ENCODE measurements at regions of chr3 and their contacts with region 1.

Region 1: GRCh38 chr3:112333002-112333380 is at the start of gene CD200:
- DNase-seq: peak; percentile 66
- ATAC-seq: peak; percentile 70
- H3K4me3 Mint-ChIP-seq: peak within 1 kb of the TSS; percentile 90
- H3K27ac Mint-ChIP-seq: peak within 1 kb of the TSS; percentile 93
- H3K4me1 Mint-ChIP-seq: peaks cover 38% of the 10 kb centered on the region
- H3K27me3 Mint-ChIP-seq: no peaks in the 10 kb centered on the region
- CTCF ChIP-seq: no peak
- total RNA-seq, gene CD200: 15.7 to 16.7 TPM

Region 2: GRCh38 chr3:112027826-112028225 is 305.2 kb before region 1 on chr3:
- CTCF ChIA-PET with region 1: no interaction called
- POLR2A ChIA-PET with region 1: no interaction called
- intact Hi-C with region 1: no loop called
- DNase-seq: no peak
- ATAC-seq: no peak
- H3K4me3 Mint-ChIP-seq: no peak overlapping the region
- H3K27ac Mint-ChIP-seq: no peak overlapping the region
- H3K4me1 Mint-ChIP-seq: no peaks in the 10 kb centered on the region
- H3K27me3 Mint-ChIP-seq: no peaks in the 10 kb centered on the region
- CTCF ChIP-seq: no peak

Region 3: DNA sequence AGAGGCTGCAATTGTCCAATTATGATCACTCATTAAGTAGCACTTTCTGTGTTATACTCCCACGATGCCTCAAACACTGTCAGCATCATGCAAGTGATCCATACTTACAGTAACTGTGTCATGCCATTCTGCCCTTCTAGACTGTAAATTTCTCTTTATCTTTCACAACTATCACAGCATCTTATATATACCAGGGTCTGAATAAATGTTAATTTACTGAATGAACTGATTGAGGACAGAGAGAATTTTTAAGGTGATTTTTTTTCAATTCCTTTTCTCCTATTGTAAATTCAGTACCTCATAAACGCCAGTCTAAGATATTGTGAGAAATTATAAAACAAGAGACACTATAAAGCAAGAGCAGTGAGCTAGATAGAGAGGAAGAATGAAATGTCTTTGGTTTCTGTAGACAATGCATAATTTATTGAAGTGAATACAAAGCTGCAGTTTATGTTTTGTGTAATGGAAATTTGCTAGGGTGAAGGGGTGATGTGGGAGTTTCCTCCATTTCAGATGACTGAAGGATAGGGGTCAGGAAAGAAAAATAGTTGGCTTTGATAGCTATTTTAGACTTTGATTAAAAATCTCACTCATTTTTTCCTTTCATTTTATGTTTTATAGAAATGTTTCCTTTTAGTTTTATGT is 17.3 kb after region 1 on chr3:
- CTCF ChIA-PET with region 1: interaction called, 7 read pairs
- POLR2A ChIA-PET with region 1: interaction called, 11 read pairs
- intact Hi-C with region 1: no loop called
- DNase-seq: no peak
- ATAC-seq: no peak
- H3K4me3 Mint-ChIP-seq: no peak overlapping the region
- H3K27ac Mint-ChIP-seq: no peak overlapping the region
- H3K4me1 Mint-ChIP-seq: peaks cover 21% of the 10 kb centered on the region
- H3K27me3 Mint-ChIP-seq: no peaks in the 10 kb centered on the region
- CTCF ChIP-seq: no peak

Region 4: DNA sequence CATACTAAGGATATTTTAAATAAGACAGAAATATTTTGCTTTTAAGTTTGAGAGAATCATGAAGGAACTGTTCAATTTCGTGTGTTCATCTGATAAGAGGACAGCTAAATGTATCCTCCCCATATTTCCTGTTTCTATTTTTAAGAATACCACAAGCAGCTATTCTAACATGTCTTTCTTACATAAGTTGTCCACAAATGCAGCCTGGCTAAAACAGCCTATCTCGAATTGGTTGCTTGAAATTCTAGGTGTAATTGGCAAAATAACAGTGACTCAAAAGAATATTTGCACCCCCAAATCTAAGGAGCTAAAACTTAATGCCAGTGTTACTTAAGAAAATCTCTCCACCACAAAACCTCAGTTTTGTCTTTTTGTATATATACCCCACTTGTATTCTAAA is 131.3 kb after region 1 on chr3:
- CTCF ChIA-PET with region 1: no interaction called
- POLR2A ChIA-PET with region 1: interaction called, 4 read pairs
- intact Hi-C with region 1: loop called (anchors 5 kb)
- DNase-seq: no peak
- ATAC-seq: no peak
- H3K4me3 Mint-ChIP-seq: peak overlapping the region; percentile 37
- H3K27ac Mint-ChIP-seq: peak overlapping the region; percentile 89
- H3K4me1 Mint-ChIP-seq: peaks cover 84% of the 10 kb centered on the region
- H3K27me3 Mint-ChIP-seq: no peaks in the 10 kb centered on the region
- CTCF ChIP-seq: no peak

Region 5: DNA sequence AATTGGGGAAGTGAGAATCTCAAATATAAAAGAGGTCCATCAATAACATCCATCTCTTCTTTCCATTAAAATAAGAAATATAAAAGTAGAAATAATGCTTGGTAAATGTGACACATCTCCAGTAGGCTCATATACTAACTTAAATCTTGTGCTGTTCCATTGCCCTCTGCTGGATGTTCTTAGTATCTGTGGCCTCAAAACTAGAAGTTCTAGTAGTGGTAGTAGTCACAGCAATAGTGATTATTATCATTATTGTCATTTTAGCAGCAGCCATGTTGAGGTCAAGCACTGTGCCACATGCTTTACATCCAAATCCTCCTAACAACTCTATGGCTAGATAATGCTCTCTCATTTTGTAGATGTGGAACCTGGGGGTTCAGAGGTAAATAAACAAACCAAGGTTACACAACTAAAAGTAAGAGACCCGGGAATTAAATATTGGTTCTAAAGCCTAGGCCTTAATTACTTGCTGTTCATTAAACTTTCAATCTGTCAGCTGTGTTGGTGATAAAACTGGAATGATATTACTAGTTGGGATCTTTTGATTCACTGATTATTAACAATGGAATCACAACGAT is 186.5 kb after region 1 on chr3:
- CTCF ChIA-PET with region 1: interaction called, 16 read pairs
- POLR2A ChIA-PET with region 1: interaction called, 3 read pairs
- intact Hi-C with region 1: no loop called
- DNase-seq: peak; percentile 47
- ATAC-seq: peak; percentile 80
- H3K4me3 Mint-ChIP-seq: no peak overlapping the region
- H3K27ac Mint-ChIP-seq: peak overlapping the region; percentile 71
- H3K4me1 Mint-ChIP-seq: peaks cover 24% of the 10 kb centered on the region
- H3K27me3 Mint-ChIP-seq: no peaks in the 10 kb centered on the region
- CTCF ChIP-seq: peak; percentile 73